ENCODE measurements at regions of chr3 and their contacts with region 1.

Region 1: DNA sequence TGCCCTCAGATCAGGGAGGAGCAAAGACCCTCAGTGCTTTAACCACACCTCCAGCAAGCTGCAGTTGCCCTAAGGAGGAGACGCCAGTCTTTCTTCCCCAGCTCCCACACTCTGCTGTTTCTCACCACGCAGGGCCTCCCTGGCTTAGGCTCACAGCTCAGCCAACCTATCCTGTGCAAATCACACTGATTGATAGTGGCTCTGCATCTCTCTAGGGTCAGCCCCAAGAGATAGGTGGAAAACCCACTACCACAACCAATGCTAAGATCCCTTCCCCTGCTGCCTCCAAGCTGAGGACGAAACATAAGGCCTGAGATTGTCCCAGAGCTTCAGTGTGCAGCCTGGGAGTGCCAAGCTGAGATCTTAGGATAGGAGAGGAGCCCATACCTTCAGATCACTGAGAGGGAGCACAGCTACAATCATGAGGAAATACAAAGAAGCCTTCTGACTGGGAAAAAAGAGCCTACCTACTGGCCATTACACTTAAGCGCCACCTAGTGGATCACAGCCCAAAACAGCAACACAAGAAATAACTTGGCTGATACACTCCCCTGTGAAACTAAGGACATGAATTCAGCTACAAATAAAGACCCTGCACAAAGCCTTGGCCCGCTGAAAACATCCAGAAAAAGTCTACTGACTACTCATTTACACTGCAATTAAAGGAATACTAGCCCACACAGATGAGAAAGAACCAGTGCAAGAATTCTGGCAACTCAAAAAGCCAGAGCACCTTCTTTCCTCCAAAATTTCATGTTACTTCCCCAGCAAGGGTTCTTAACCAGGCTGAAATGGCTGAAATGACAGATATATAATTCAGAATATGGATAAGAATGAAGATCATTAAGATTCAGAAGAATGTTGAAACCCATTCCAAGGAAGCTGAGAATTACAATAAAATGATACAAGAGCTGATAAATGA is 271.5 kb upstream of the DCBLD2 start:
- DNase-seq: peak; percentile 66
- H3K4me3 Mint-ChIP-seq: no peak overlapping the region
- H3K27ac Mint-ChIP-seq: no peak overlapping the region
- H3K4me1 Mint-ChIP-seq: no peaks in the 10 kb centered on the region
- H3K27me3 Mint-ChIP-seq: no peaks in the 10 kb centered on the region
- CTCF ChIP-seq: peak; percentile 61

Region 2: GRCh38 chr3:99023590-99024192 is 149.3 kb before region 1 on chr3:
- CTCF ChIA-PET with region 1: interaction called, 12 read pairs
- intact Hi-C with region 1: loop called (anchors 1 kb)
- DNase-seq: peak; percentile 7
- H3K4me3 Mint-ChIP-seq: no peak overlapping the region
- H3K27ac Mint-ChIP-seq: no peak overlapping the region
- H3K4me1 Mint-ChIP-seq: no peaks in the 10 kb centered on the region
- H3K27me3 Mint-ChIP-seq: no peaks in the 10 kb centered on the region
- CTCF ChIP-seq: peak; percentile 30

Region 3: DNA sequence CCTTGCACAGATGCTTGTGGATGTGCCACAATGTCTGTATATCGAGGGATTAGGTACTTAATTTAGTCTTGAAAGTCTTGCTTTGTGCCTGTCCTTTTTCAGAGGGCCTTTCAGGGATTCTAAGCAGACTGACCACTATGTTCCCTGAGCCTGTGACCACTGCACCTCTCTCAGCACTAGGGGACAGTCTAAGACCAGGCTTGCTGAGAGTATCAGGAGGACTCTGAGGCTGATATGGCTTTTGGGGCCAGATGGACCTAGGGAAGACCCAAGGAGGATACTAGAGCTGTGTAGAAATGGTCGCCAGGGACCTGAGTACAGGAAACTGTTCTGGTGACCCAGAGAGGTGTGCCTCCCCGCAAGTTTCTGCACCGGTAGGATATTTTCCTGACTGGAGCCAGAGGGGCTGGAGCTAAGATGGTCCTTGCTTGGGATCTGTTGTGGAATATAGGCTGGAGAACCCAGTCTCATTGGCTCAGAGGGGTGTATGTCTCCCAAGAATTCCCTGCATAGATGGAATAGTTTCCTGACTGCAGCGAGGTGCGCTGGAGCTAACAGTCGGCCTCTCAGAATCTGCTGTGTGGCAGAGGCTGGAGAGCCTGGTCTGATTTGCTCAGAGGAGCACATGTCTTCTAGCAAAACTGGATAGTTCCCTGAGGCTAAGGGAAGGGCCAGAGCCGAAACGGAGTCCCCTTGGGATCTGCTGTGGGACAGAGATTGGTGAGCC is 58.3 kb before region 1 on chr3:
- CTCF ChIA-PET with region 1: no interaction called
- intact Hi-C with region 1: loop called (anchors 2 kb)
- DNase-seq: peak; percentile 43
- H3K4me3 Mint-ChIP-seq: no peak overlapping the region
- H3K27ac Mint-ChIP-seq: no peak overlapping the region
- H3K4me1 Mint-ChIP-seq: no peaks in the 10 kb centered on the region
- H3K27me3 Mint-ChIP-seq: no peaks in the 10 kb centered on the region
- CTCF ChIP-seq: peak; percentile 54

Region 4: DNA sequence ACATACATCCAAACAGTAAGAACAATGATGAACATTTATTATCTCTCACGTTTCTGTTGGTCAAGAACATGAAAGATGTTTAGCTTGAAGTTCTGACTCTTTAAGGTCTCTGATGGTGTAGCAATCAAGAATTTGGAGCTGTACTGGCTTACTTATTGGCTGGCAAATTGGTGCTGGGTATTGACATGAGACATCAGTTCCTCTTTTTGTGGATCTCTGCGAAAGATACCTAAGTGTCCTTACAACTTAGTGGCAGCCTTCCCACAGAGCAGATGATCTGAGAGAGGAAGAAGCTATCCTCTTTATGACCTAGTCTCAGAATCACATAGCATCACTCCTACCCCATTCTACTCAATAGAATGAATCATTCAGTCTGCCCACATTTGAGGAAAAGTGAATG is 38.3 kb after region 1 on chr3:
- CTCF ChIA-PET with region 1: no interaction called
- intact Hi-C with region 1: no loop called
- DNase-seq: no peak
- H3K4me3 Mint-ChIP-seq: no peak overlapping the region
- H3K27ac Mint-ChIP-seq: no peak overlapping the region
- H3K4me1 Mint-ChIP-seq: no peaks in the 10 kb centered on the region
- H3K27me3 Mint-ChIP-seq: no peaks in the 10 kb centered on the region
- CTCF ChIP-seq: no peak

Region 5: GRCh38 chr3:99319961-99320360 is 147.0 kb after region 1 on chr3:
- CTCF ChIA-PET with region 1: no interaction called
- intact Hi-C with region 1: no loop called
- DNase-seq: no peak
- H3K4me3 Mint-ChIP-seq: no peak overlapping the region
- H3K27ac Mint-ChIP-seq: no peak overlapping the region
- H3K4me1 Mint-ChIP-seq: no peaks in the 10 kb centered on the region
- H3K27me3 Mint-ChIP-seq: no peaks in the 10 kb centered on the region
- CTCF ChIP-seq: no peak